ENCODE measurements at regions of chr5 and their contacts with region 1.

Region 1: DNA sequence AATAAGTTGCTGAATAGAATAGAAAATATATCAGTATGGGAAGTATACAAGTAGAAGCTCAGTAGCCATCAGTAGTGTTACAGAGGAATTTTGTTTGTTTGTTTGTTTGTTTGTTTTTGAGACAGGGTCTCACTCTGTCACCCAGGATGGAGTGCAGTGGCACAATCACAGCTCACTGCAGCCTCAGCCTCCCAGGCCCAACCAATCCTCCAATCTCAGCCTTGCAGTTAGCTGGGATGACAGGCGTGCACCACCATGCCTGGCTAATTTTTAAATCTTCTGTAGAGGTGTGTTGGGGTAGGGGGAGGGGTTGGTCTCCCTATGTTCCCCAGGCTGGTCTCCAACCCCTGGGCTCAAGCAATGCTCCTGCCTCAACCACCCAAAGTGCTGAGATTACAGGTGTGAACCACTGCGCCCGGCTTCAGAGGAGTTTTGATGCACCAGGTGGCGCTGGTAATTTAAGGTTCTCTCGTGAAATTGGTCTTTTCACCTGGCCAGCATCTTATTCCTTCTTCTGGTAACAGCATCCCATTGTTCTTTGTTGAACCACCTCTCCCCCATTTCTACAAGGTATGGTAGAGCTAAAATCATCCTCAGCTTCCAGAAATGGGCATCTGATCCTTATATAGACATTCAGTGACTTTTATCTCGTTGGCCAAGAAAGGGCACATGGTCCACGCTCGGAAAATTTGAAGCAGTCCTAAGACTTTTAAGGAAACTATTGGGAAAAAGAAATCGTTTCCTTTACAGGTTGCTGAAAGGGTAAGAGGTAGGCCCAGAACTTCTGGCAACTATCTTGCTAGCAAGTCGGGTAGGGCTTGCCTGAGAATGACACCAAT is 157.1 kb downstream of the ARRDC3 start:
- DNase-seq: no peak
- H3K4me3 ChIP-seq: no peak overlapping the region
- H3K27ac ChIP-seq: no peak overlapping the region
- H3K4me1 ChIP-seq: no peaks in the 10 kb centered on the region
- H3K27me3 ChIP-seq: no peaks in the 10 kb centered on the region
- CTCF ChIP-seq: peak in 1 of 2 donors; percentile 14
- POLR2A ChIP-seq: no peak

Region 2: GRCh38 chr5:91101600-91102379 is 124.3 kb before region 1 on chr5:
- CTCF ChIA-PET with region 1: no interaction called
- POLR2A ChIA-PET with region 1: no interaction called
- dilution Hi-C with region 1: no loop called
- intact Hi-C with region 1: loop called (anchors 1 kb)
- DNase-seq: peak; percentile 85
- H3K4me3 ChIP-seq: no peak overlapping the region
- H3K27ac ChIP-seq: no peak overlapping the region
- H3K4me1 ChIP-seq: no peaks in the 10 kb centered on the region
- H3K27me3 ChIP-seq: no peaks in the 10 kb centered on the region
- CTCF ChIP-seq: peak; percentile 67 to 70
- POLR2A ChIP-seq: no peak

Region 3: DNA sequence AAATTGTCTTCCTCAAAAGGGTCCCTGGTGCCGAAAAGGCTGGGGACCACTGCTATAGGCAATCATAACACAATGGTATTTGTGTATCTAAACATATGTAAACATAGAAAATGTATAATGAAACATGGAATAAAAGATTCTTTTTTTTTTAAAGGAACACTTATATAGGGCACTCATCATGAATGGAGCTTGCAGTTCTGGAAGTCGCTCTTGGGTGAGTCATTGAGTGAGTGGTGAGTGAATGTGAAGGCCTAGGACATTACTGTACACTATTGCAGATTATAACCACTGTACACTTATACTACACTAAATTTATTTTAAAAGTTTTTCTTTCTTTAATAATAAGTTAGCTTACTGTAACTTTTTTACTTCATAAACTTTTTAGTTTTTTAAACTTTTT is 19.3 kb before region 1 on chr5:
- CTCF ChIA-PET with region 1: no interaction called
- POLR2A ChIA-PET with region 1: no interaction called
- dilution Hi-C with region 1: no loop called
- intact Hi-C with region 1: no loop called
- DNase-seq: no peak
- H3K4me3 ChIP-seq: no peak overlapping the region
- H3K27ac ChIP-seq: no peak overlapping the region
- H3K4me1 ChIP-seq: peaks cover 3% of the 10 kb centered on the region
- H3K27me3 ChIP-seq: no peaks in the 10 kb centered on the region
- CTCF ChIP-seq: no peak
- POLR2A ChIP-seq: no peak